Heart left ventricle (tissue), 16 donors: ENCODE measurements at regions of chr20 and their contacts with region 1.

Region 1: DNA sequence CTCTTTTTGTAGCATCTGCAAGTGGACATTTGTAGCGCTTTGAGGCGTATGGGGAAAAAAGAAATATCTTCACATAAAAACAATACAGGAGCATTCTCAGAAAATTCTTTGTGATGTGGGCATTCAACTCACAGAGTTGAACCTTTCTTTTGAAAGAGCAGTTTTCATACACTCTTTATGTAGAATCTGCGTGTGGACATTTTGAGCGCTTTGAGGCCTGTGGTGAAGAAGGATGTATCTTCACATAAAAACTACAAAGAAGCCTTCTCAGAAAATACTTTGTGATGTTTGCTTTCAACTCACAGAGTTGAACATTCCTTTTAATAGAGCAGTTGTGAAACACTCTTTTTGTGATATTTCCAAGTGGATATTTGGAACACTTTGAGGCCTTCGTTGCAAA is 598.4 kb upstream of the ZNF337 start:
- DNase-seq: no peak
- ATAC-seq: no peak
- H3K4me3 ChIP-seq: no peak overlapping the region
- H3K27ac ChIP-seq: no peak overlapping the region
- H3K4me1 ChIP-seq: no peaks in the 10 kb centered on the region
- H3K27me3 ChIP-seq: no peaks in the 10 kb centered on the region
- CTCF ChIP-seq: no peak
- POLR2A ChIP-seq: no peak

Region 2: GRCh38 chr20:26243731-26244130 is 51.3 kb before region 1 on chr20:
- intact Hi-C with region 1: loop called in 1 of 10 experiments (anchors 10 kb)
- DNase-seq: no peak
- ATAC-seq: no peak
- H3K4me3 ChIP-seq: no peak overlapping the region
- H3K27ac ChIP-seq: no peak overlapping the region
- H3K4me1 ChIP-seq: no peaks in the 10 kb centered on the region
- H3K27me3 ChIP-seq: no peaks in the 10 kb centered on the region
- CTCF ChIP-seq: no peak
- POLR2A ChIP-seq: no peak